ENCODE measurements at regions of chr3 and their contacts with region 1.

Region 1: GRCh38 chr3:31976302-31976701 is 4.8 kb downstream of the OSBPL10 start:
- DNase-seq: no peak
- ATAC-seq: no peak
- H3K4me3 ChIP-seq: no peak overlapping the region
- H3K4me3 Mint-ChIP-seq: peak overlapping the region; percentile 33
- H3K27ac ChIP-seq: peak overlapping the region in 1 of 2 donors; percentile 73
- H3K27ac Mint-ChIP-seq: peak overlapping the region; percentile 66
- H3K4me1 ChIP-seq: peaks cover 79 to 81% of the 10 kb centered on the region in 2 donors
- H3K4me1 Mint-ChIP-seq: peaks cover 85% of the 10 kb centered on the region
- H3K27me3 ChIP-seq: no peaks in the 10 kb centered on the region
- H3K27me3 Mint-ChIP-seq: no peaks in the 10 kb centered on the region
- CTCF ChIP-seq: no peak

Region 2: DNA sequence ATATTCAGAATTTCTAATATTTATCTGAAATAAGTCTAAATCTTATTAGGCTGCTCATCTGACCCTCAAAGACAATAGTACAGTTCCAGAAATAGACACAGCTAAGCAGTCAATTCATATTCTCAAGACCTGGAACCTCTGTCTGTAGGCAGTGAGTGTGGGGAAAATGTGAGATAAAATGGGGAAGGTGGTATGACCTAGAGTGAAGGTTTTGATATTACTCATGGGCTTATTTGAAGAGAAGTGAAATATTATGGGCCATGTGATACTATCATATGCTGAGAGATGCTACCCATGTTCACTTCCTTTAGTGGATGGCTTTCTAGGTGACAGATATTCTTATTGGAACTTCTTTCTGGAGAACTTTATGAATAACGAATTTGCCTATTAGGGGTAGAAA is 1336.4 kb before region 1 on chr3:
- CTCF ChIA-PET with region 1: no interaction called
- POLR2A ChIA-PET with region 1: no interaction called
- intact Hi-C with region 1: no loop called
- DNase-seq: peak; percentile 79
- ATAC-seq: peak; percentile 58
- H3K4me3 ChIP-seq: peak overlapping the region in 1 of 5 experiments; percentile 10
- H3K4me3 Mint-ChIP-seq: peak overlapping the region; percentile 71
- H3K27ac ChIP-seq: peak overlapping the region; percentile 89 to 90
- H3K27ac Mint-ChIP-seq: peak overlapping the region; percentile 81
- H3K4me1 ChIP-seq: peaks cover 96 to 100% of the 10 kb centered on the region in 2 donors
- H3K4me1 Mint-ChIP-seq: peaks cover 97% of the 10 kb centered on the region
- H3K27me3 ChIP-seq: no peaks in the 10 kb centered on the region
- H3K27me3 Mint-ChIP-seq: no peaks in the 10 kb centered on the region
- CTCF ChIP-seq: no peak

Region 3: GRCh38 chr3:31960793-31961431 is 15.4 kb before region 1 on chr3:
- CTCF ChIA-PET with region 1: interaction called, 11 read pairs
- POLR2A ChIA-PET with region 1: interaction called, 15 read pairs
- intact Hi-C with region 1: loop called (anchors 2 kb)
- DNase-seq: peak; percentile 71
- ATAC-seq: peak; percentile 65
- H3K4me3 ChIP-seq: peak overlapping the region in 3 of 5 experiments; percentile 34 to 60 (median 36)
- H3K4me3 Mint-ChIP-seq: peak overlapping the region; percentile 89
- H3K27ac ChIP-seq: peak overlapping the region; percentile 56 to 88
- H3K27ac Mint-ChIP-seq: peak overlapping the region; percentile 95
- H3K4me1 ChIP-seq: peaks cover 76 to 84% of the 10 kb centered on the region in 2 donors
- H3K4me1 Mint-ChIP-seq: peaks cover 77% of the 10 kb centered on the region
- H3K27me3 ChIP-seq: no peaks in the 10 kb centered on the region
- H3K27me3 Mint-ChIP-seq: no peaks in the 10 kb centered on the region
- CTCF ChIP-seq: no peak

Region 4: GRCh38 chr3:32132121-32132520 is 155.8 kb after region 1 on chr3:
- CTCF ChIA-PET with region 1: no interaction called
- POLR2A ChIA-PET with region 1: no interaction called
- intact Hi-C with region 1: no loop called
- DNase-seq: no peak
- ATAC-seq: no peak
- H3K4me3 ChIP-seq: no peak overlapping the region
- H3K4me3 Mint-ChIP-seq: no peak overlapping the region
- H3K27ac ChIP-seq: no peak overlapping the region
- H3K27ac Mint-ChIP-seq: no peak overlapping the region
- H3K4me1 ChIP-seq: peaks cover 0 to 3% of the 10 kb centered on the region in 2 donors
- H3K4me1 Mint-ChIP-seq: peaks cover 5% of the 10 kb centered on the region
- H3K27me3 ChIP-seq: no peaks in the 10 kb centered on the region
- H3K27me3 Mint-ChIP-seq: no peaks in the 10 kb centered on the region
- CTCF ChIP-seq: no peak

Region 5: GRCh38 chr3:33687406-33688010 is 1711.2 kb after region 1 on chr3:
- CTCF ChIA-PET with region 1: no interaction called
- POLR2A ChIA-PET with region 1: no interaction called
- intact Hi-C with region 1: no loop called
- DNase-seq: no peak
- ATAC-seq: no peak
- H3K4me3 ChIP-seq: no peak overlapping the region
- H3K4me3 Mint-ChIP-seq: no peak overlapping the region
- H3K27ac ChIP-seq: no peak overlapping the region
- H3K27ac Mint-ChIP-seq: no peak overlapping the region
- H3K4me1 ChIP-seq: no peaks in the 10 kb centered on the region
- H3K4me1 Mint-ChIP-seq: no peaks in the 10 kb centered on the region
- H3K27me3 ChIP-seq: no peaks in the 10 kb centered on the region
- H3K27me3 Mint-ChIP-seq: no peaks in the 10 kb centered on the region
- CTCF ChIP-seq: no peak